ENCODE measurements at regions of chr9 and their contacts with region 1.

Region 1: DNA sequence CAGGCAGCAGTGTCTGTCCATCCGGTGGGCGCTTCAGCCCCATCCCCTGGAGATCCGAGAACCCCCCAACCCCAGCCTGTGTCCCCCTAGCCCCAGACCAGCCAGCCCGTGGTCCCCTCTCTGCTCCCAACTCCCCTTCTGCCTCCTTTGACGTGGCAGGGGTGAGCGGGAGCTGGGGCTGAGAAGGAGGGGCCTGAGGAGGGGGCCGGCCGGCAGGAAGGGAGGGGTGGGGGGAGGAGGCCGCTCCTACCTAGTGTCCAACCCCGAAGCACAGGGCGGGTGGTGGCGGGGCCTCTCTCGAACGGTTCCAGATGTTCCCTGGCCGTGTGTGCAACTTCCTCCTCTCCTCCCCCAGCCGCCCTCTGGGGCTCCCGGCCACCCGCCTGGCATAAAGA is 31.0 kb downstream of the GOLGA2 start:
- DNase-seq: peak; percentile 51
- ATAC-seq: peak; percentile 58
- H3K4me3 ChIP-seq: peak overlapping the region; percentile 17 to 64 (median 26); a peak in 4 of 6 replicates
- H3K27ac ChIP-seq: no peak overlapping the region
- H3K4me1 ChIP-seq: peaks cover 47% of the 10 kb centered on the region
- H3K27me3 ChIP-seq: peaks cover 0 to 11% of the 10 kb centered on the region in 2 experiments; a peak in 1 of 5 replicates
- CTCF ChIP-seq: no peak
- EP300 ChIP-seq: no peak
- POLR2A ChIP-seq: no peak
- RAD21 ChIP-seq: no peak

Region 2: GRCh38 chr9:128136816-128137793 is 107.7 kb before region 1 on chr9:
- CTCF ChIA-PET with region 1: no interaction called
- POLR2A ChIA-PET with region 1: no interaction called
- in situ Hi-C with region 1: no loop called
- intact Hi-C with region 1: no loop called
- DNase-seq: no peak
- ATAC-seq: peak; percentile 46
- H3K4me3 ChIP-seq: peak overlapping the region in 1 of 3 experiments; percentile 53; a peak in 3 of 6 replicates
- H3K27ac ChIP-seq: no peak overlapping the region
- H3K4me1 ChIP-seq: peaks cover 47% of the 10 kb centered on the region
- H3K27me3 ChIP-seq: no peaks in the 10 kb centered on the region; a peak in 1 of 5 replicates
- CTCF ChIP-seq: no peak
- EP300 ChIP-seq: no peak
- POLR2A ChIP-seq: no peak
- RAD21 ChIP-seq: no peak

Region 3: GRCh38 chr9:128219831-128220230 is 25.0 kb before region 1 on chr9:
- CTCF ChIA-PET with region 1: no interaction called
- POLR2A ChIA-PET with region 1: no interaction called
- in situ Hi-C with region 1: no loop called
- intact Hi-C with region 1: no loop called
- DNase-seq: no peak
- ATAC-seq: 0 out of 3 replicates have a peak, but pooled peaks have one; percentile 10
- H3K4me3 ChIP-seq: no peak overlapping the region
- H3K27ac ChIP-seq: no peak overlapping the region
- H3K4me1 ChIP-seq: peaks cover 43% of the 10 kb centered on the region
- H3K27me3 ChIP-seq: peaks cover 0 to 17% of the 10 kb centered on the region in 2 experiments; a peak in 4 of 5 replicates
- CTCF ChIP-seq: no peak
- EP300 ChIP-seq: no peak
- POLR2A ChIP-seq: no peak
- RAD21 ChIP-seq: no peak

Region 4: DNA sequence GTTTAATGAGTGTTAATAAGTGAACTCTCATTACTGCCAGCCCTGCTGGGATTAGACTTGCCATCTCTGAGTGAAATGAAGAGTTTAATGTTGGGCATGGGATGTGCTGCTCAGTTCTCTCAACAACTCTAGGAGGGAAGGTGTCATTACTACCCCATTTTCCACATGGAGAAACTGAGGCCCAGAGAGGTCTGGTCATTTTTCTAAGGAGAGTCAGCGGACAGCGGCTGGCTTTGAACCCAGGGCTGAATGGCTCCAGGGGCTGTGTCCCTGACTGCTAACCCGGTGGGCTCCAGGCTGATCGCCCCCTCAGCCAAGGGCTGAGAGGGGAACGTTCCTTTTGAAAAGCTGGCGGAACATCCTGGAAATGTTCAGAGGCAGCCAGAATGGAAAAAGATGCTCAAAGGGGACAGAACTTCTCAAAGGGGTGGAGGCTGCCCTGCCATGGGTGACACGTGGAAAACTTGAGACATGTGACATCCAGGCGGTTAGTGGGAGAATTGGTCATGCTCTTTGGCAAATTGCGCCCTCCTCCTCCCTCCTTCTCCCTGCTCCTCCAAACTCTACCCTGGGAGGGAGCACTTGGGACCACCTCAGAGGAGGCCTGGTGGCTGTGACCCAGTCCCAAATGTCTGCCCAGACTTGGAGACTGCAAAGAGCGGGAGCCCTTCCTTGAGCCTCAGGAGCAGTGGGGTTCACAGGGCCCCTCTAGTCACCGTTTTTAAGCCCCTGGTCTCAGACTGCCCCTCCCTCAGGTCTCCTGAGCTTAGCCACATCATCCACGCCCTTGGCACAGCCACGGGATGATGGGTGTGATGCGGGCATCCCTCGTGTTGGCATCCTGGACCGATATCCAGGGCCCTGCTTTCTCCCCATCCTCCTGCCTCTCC is 13.0 kb before region 1 on chr9:
- CTCF ChIA-PET with region 1: no interaction called
- POLR2A ChIA-PET with region 1: no interaction called
- in situ Hi-C with region 1: no loop called
- intact Hi-C with region 1: no loop called
- DNase-seq: no peak
- ATAC-seq: no peak
- H3K4me3 ChIP-seq: no peak overlapping the region
- H3K27ac ChIP-seq: no peak overlapping the region
- H3K4me1 ChIP-seq: no peaks in the 10 kb centered on the region
- H3K27me3 ChIP-seq: peaks cover 5 to 29% of the 10 kb centered on the region in 2 experiments; a peak in 3 of 5 replicates
- CTCF ChIP-seq: no peak
- EP300 ChIP-seq: no peak
- POLR2A ChIP-seq: no peak
- RAD21 ChIP-seq: no peak

Region 5: GRCh38 chr9:128275996-128276573 is 31.3 kb after region 1 on chr9 and contains the starts of genes GOLGA2 and SWI5:
- CTCF ChIA-PET with region 1: no interaction called
- POLR2A ChIA-PET with region 1: interaction called, 13 read pairs
- in situ Hi-C with region 1: no loop called
- intact Hi-C with region 1: no loop called
- DNase-seq: peak; percentile 96
- ATAC-seq: peak; percentile 96
- H3K4me3 ChIP-seq: peak within 1 kb of the TSS; percentile 91 to 98 (median 96)
- H3K27ac ChIP-seq: peak within 1 kb of the TSS; percentile 85
- H3K4me1 ChIP-seq: peaks cover 29% of the 10 kb centered on the region
- H3K27me3 ChIP-seq: no peaks in the 10 kb centered on the region; a peak in 1 of 5 replicates
- CTCF ChIP-seq: no peak; the same call in 1 of the 2 replicates
- EP300 ChIP-seq: 0 out of 4 replicates have a peak, but pooled peaks of 1 of the 2 experiments have one; percentile 1
- POLR2A ChIP-seq: peak; percentile 94 to 99
- RAD21 ChIP-seq: no peak
- total RNA-seq, gene GOLGA2: 35.4 and 45.8 TPM in 2 replicates
- total RNA-seq, gene SWI5: 39.2 and 46.5 TPM in 2 replicates